ENCODE measurements at regions of chr11 and their contacts with region 1.

Region 1: DNA sequence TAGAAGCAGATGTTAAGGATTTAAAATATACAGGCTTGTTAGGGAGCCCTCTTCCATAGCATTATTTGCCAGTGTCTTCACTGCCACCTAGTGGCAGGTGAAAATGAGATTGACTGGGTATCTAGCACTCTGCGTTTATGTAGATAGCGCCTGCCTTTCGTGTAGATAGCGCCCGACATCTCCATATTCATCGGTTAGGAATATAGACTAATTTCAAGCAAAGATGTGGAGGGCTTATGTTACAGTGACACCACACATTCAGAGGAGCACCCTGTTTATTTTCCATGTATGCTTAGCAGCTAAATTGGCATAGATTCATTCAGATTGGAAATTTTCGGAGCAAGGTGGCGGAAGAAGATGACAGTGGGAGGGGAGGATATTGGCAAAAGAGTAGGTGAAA is 72.0 kb downstream of the SLC5A12 start:
- DNase-seq: peak in 1 of 2 donors; percentile 12
- ATAC-seq: peak in 1 of 2 donors; percentile 61
- H3K4me3 ChIP-seq: no peak overlapping the region
- H3K27ac ChIP-seq: no peak overlapping the region
- H3K4me1 ChIP-seq: no peaks in the 10 kb centered on the region
- H3K27me3 ChIP-seq: no peaks in the 10 kb centered on the region
- CTCF ChIP-seq: peak in 4 of 5 experiments; percentile 19 to 57 (median 40)
- POLR2A ChIP-seq: no peak

Region 2: DNA sequence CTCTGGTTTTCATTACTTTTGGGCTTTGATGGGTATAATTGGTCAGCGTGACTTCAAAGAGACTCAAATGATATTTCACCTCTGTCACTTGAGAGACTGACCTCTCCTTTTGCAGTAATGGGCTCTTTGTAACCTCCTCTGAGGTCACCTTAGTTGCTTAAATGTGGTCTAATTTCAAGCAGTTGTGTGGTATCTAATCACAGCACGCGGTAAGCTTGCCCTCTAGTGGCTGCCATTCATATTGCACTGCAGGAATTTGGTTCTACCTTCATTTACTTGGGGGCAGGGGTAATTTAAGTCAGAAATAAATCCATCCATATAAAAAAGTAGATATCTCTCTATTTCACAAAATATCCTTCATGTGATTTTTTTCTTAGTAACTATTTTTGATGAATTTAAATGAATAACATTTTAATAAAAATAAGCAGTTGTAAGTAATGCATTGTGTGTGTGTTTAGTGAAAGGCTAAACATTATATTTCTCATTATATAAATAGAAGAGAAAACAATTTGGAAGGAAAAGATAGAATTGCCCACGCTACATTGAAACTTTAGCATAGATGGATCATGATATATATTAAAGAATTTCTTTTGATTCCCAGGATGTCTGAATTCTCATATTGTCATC is 373.0 kb before region 1 on chr11:
- in situ Hi-C with region 1: loop called in 1 of 4 experiments (anchors 25 kb)
- intact Hi-C with region 1: no loop called
- DNase-seq: peak in 1 of 2 donors; percentile 18
- ATAC-seq: peak in 1 of 2 donors; percentile 53
- H3K4me3 ChIP-seq: no peak overlapping the region
- H3K27ac ChIP-seq: no peak overlapping the region
- H3K4me1 ChIP-seq: no peaks in the 10 kb centered on the region
- H3K27me3 ChIP-seq: no peaks in the 10 kb centered on the region
- CTCF ChIP-seq: peak; percentile 68 to 90 (median 70)
- POLR2A ChIP-seq: no peak

Region 3: GRCh38 chr11:26297189-26297975 is 352.5 kb before region 1 on chr11:
- in situ Hi-C with region 1: loop called in 1 of 4 experiments (anchors 25 kb)
- intact Hi-C with region 1: loop called (anchors 2 kb)
- DNase-seq: no peak
- ATAC-seq: no peak
- H3K4me3 ChIP-seq: no peak overlapping the region
- H3K27ac ChIP-seq: no peak overlapping the region
- H3K4me1 ChIP-seq: no peaks in the 10 kb centered on the region
- H3K27me3 ChIP-seq: no peaks in the 10 kb centered on the region
- CTCF ChIP-seq: peak in 4 of 5 experiments; percentile 19 to 40 (median 39)
- POLR2A ChIP-seq: no peak

Measured in gastrocnemius medialis (tissue), 4 donors.